A549 (cell line): ENCODE measurements at regions of chr10 and their contacts with region 1.

Region 1: DNA sequence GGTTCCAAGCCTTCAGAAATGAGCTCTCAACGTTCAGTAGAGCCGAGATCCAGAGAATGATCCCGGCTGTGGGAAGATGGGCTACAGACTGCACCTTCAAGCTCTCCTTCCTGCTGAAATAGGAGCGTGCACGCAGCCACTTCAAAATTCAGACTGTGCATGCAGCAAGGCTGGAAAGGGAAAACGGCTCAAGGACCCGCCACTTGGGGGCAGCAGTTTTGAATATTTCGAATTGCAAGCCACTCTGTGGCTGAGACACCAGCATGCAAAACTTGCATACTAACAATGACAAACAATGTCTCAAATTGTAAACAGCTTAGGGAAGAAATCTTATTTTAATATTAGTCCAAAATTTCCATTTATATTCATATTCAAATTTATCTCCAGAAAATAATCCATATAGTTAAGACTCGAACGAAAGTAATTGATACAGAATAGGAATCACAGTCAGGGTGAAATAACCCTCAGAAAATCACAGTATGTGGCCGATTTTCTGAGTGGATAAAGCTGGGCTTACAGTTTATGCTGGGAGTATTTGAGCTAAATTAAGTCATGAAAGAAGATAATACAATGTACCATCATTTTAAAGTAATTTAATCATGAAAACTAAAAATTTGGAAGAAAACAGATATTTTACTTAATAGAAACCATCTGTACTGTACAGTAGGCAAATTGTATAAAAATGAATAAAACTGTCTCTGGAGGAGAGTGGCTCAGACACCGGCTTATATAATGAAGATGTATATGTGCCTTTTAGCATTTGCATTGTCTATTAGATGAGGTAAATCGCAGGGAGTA is 137.9 kb upstream of the MKI67 start:
- DNase-seq: peak; percentile 33 to 64
- ATAC-seq: peak; percentile 86 to 92
- H3K4me3 ChIP-seq: no peak overlapping the region
- H3K27ac ChIP-seq: no peak overlapping the region
- H3K4me1 ChIP-seq: no peaks in the 10 kb centered on the region
- CTCF ChIP-seq: peak; percentile 68
- EP300 ChIP-seq: no peak
- POLR2A ChIP-seq: no peak
- RAD21 ChIP-seq: peak; percentile 43 to 56

Region 2: GRCh38 chr10:128530301-128530700 is 266.2 kb after region 1 on chr10:
- CTCF ChIA-PET with region 1: interaction called, 10 read pairs
- POLR2A ChIA-PET with region 1: no interaction called
- DNase-seq: peak; percentile 9 to 20
- ATAC-seq: no peak
- H3K4me3 ChIP-seq: no peak overlapping the region
- H3K27ac ChIP-seq: no peak overlapping the region
- H3K4me1 ChIP-seq: no peaks in the 10 kb centered on the region
- CTCF ChIP-seq: peak; percentile 42
- EP300 ChIP-seq: no peak
- POLR2A ChIP-seq: no peak
- RAD21 ChIP-seq: peak in 1 of 2 experiments; percentile 22; a peak in 1 of 5 replicates

Region 3: GRCh38 chr10:128859738-128860386 is 595.8 kb after region 1 on chr10:
- CTCF ChIA-PET with region 1: interaction called, 10 read pairs
- POLR2A ChIA-PET with region 1: no interaction called
- DNase-seq: peak; percentile 21 to 32
- ATAC-seq: peak in 1 of 2 experiments; percentile 58; a peak in 2 of 6 replicates
- H3K4me3 ChIP-seq: no peak overlapping the region
- H3K27ac ChIP-seq: no peak overlapping the region
- H3K4me1 ChIP-seq: no peaks in the 10 kb centered on the region
- CTCF ChIP-seq: peak; percentile 51
- EP300 ChIP-seq: no peak
- POLR2A ChIP-seq: no peak
- RAD21 ChIP-seq: peak; percentile 29 to 54; a peak in 4 of 5 replicates